ENCODE measurements at regions of chr12 and their contacts with region 1.

Region 1: GRCh38 chr12:12376646-12377448 is 20.0 kb downstream of the BORCS5 start:
- DNase-seq: no peak
- H3K4me3 ChIP-seq: no peak overlapping the region
- H3K27ac ChIP-seq: no peak overlapping the region
- H3K4me1 ChIP-seq: no peaks in the 10 kb centered on the region
- H3K27me3 ChIP-seq: no peaks in the 10 kb centered on the region
- CTCF ChIP-seq: peak; percentile 60 to 84 (median 67)
- EP300 ChIP-seq: no peak
- POLR2A ChIP-seq: no peak

Region 2: GRCh38 chr12:12546314-12546772 is 169.5 kb after region 1 on chr12:
- intact Hi-C with region 1: no loop called
- DNase-seq: no peak
- H3K4me3 ChIP-seq: no peak overlapping the region
- H3K27ac ChIP-seq: no peak overlapping the region
- H3K4me1 ChIP-seq: no peaks in the 10 kb centered on the region
- H3K27me3 ChIP-seq: no peaks in the 10 kb centered on the region
- CTCF ChIP-seq: no peak
- EP300 ChIP-seq: no peak
- POLR2A ChIP-seq: no peak

Region 3: GRCh38 chr12:12654691-12655460 is 278.0 kb after region 1 on chr12:
- intact Hi-C with region 1: loop called (anchors 1 kb)
- DNase-seq: no peak
- H3K4me3 ChIP-seq: no peak overlapping the region
- H3K27ac ChIP-seq: no peak overlapping the region
- H3K4me1 ChIP-seq: peaks cover 0 to 4% (median 0%) of the 10 kb centered on the region in 4 donors
- H3K27me3 ChIP-seq: no peaks in the 10 kb centered on the region
- CTCF ChIP-seq: no peak
- EP300 ChIP-seq: no peak
- POLR2A ChIP-seq: no peak

Region 4: GRCh38 chr12:12704593-12705230 is 327.9 kb after region 1 on chr12:
- intact Hi-C with region 1: loop called (anchors 2 kb)
- DNase-seq: peak; percentile 79
- H3K4me3 ChIP-seq: no peak overlapping the region
- H3K27ac ChIP-seq: peak overlapping the region in 3 of 4 donors; percentile 25 to 50 (median 43)
- H3K4me1 ChIP-seq: peaks cover 0 to 6% (median 6%) of the 10 kb centered on the region in 4 donors
- H3K27me3 ChIP-seq: no peaks in the 10 kb centered on the region
- CTCF ChIP-seq: peak; percentile 84 to 97 (median 93)
- EP300 ChIP-seq: peak in 1 of 4 donors; percentile 8
- POLR2A ChIP-seq: no peak

Measured in sigmoid colon (tissue), 7 donors.